ENCODE measurements at regions of chr5 and their contacts with region 1.

Region 1: DNA sequence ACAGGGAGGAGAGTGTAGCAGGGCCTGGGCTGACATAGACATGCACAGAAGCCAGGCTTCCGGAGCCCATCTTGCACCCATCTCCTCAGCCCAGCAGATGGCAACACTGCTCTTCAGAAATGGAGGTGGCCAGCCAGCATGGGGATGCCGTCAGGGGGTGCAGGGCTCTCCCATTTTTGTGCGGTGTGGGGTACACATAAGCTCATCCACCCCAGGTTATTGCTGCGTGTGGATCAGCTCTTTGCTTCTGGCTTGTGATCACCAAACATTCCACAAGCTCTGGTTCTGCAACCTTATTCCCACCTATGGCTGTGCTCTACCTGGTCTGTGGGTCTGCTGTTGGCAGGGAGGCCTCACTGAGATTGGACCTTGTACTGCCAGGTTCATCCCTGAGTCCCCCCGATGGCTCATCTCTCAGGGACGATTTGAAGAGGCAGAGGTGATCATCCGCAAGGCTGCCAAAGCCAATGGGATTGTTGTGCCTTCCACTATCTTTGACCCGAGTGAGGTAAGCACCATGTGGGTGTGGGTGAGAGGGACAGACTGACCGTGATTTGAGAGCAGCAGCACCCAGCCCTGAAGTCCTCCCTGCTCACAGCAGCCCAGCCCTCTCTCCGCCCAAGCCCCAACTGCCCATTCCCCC is 17.3 kb downstream of the SLC22A5 start:
- DNase-seq: peak; percentile 81
- H3K4me3 Mint-ChIP-seq: no peak overlapping the region
- H3K27ac Mint-ChIP-seq: peak overlapping the region; percentile 87
- H3K4me1 Mint-ChIP-seq: peaks cover 59% of the 10 kb centered on the region
- H3K27me3 Mint-ChIP-seq: no peaks in the 10 kb centered on the region
- CTCF ChIP-seq: peak; percentile 90

Region 2: DNA sequence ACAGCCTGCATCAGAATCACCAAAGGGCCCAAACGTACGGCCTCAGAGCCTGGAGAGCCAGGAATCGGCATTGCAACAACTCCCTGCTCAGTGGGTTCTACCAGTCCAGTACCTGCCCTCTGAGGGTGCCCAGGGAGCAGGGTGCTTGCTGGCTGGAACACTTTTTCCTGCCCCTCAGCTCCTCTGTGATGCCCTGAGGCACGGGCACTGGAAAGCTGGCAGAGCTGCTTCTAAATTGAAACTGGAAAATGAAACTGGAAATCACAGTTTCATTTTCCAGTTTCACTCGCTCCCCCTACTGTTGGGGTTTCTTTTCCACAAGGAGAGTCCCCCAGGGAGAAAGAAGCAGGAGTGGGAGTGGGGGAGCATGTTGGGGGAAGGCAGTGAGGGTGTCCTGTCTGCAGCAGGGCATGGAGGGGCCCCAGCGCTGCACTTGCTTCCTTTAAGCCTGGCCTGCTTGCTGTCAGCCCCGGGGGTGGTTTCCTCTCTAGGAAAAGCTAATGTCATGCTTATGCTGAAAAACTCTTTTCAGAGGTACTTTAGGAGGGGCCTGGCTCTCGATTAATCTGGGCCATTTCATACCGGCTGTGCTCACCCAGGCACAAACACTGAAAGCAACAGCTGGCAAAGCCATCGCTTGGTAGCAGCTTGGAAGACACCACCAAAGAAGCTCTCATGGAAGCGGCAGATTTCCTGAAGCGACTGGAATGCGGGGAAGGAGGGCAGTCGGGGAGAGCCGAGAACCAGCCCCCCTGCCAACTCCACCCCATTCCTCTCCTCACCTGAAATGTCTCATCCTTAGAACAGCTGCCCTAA is 77.6 kb after region 1 on chr5:
- CTCF ChIA-PET with region 1: interaction called, 3 read pairs
- intact Hi-C with region 1: loop called (anchors 2 kb)
- DNase-seq: peak; percentile 43
- H3K4me3 Mint-ChIP-seq: peak overlapping the region; percentile 45
- H3K27ac Mint-ChIP-seq: peak overlapping the region; percentile 9
- H3K4me1 Mint-ChIP-seq: peaks cover 72% of the 10 kb centered on the region
- H3K27me3 Mint-ChIP-seq: no peaks in the 10 kb centered on the region
- CTCF ChIP-seq: peak; percentile 38

Region 3: GRCh38 chr5:132500931-132501630 is 114.3 kb after region 1 on chr5:
- CTCF ChIA-PET with region 1: interaction called, 83 read pairs
- intact Hi-C with region 1: loop called (anchors 1 kb)
- DNase-seq: peak; percentile 78
- H3K4me3 Mint-ChIP-seq: no peak overlapping the region
- H3K27ac Mint-ChIP-seq: peak overlapping the region; percentile 7
- H3K4me1 Mint-ChIP-seq: peaks cover 70% of the 10 kb centered on the region
- H3K27me3 Mint-ChIP-seq: no peaks in the 10 kb centered on the region
- CTCF ChIP-seq: peak; percentile 94

Region 4: GRCh38 chr5:132736853-132737833 is 350.4 kb after region 1 on chr5 and contains the start of gene KIF3A:
- CTCF ChIA-PET with region 1: interaction called, 6 read pairs
- intact Hi-C with region 1: loop called (anchors 5 kb)
- DNase-seq: peak; percentile 98
- H3K4me3 Mint-ChIP-seq: peak within 1 kb of the TSS; percentile 91
- H3K27ac Mint-ChIP-seq: peak within 1 kb of the TSS; percentile 69
- H3K4me1 Mint-ChIP-seq: peaks cover 31% of the 10 kb centered on the region
- H3K27me3 Mint-ChIP-seq: no peaks in the 10 kb centered on the region
- CTCF ChIP-seq: no peak
- total RNA-seq, gene KIF3A: 17.5 and 18.9 TPM in 2 replicates

Region 5: DNA sequence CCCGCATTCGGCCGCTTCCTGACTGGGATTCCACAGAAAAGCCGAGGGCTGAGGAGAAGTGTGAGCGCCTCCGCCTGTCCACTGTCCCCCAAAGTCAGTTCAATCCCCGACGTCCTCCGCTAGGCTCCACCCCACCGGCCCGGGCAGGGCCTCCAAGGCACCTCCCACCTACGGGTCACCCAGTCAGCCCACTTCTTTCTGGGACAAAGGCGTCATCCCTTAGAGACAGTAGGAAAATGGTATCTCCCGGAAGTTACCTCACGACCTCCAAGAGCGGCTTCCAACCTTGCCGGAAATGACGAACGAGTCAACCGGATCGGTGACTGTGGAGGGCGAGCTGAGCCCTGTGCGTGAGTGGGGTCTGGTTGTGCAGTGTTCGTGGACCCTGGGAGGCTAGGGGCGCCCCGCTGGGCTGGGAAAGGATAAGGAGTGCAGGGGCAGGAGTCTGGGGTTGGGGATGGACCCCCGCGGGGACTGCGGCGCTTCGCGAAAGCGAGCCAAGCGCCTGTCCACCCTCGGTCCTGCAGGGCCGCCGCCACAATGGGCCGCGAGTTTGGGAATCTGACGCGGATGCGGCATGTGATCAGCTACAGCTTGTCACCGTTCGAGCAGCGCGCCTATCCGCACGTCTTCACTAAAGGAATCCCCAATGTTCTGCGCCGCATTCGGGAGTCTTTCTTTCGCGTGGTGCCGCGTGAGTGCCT is 479.7 kb after region 1 on chr5 and contains the starts of genes GDF9 and UQCRQ:
- CTCF ChIA-PET with region 1: no interaction called
- intact Hi-C with region 1: loop called (anchors 5 kb)
- DNase-seq: peak; percentile 99
- H3K4me3 Mint-ChIP-seq: peak within 1 kb of the TSS; percentile 82
- H3K27ac Mint-ChIP-seq: peak within 1 kb of the TSS; percentile 93
- H3K4me1 Mint-ChIP-seq: peaks cover 8% of the 10 kb centered on the region
- H3K27me3 Mint-ChIP-seq: no peaks in the 10 kb centered on the region
- CTCF ChIP-seq: no peak
- total RNA-seq, gene GDF9: 0.61 and 0.94 TPM in 2 replicates
- total RNA-seq, gene UQCRQ: 678 and 719 TPM in 2 replicates